BJ (cell line): ENCODE measurements at regions of chr1 and their contacts with region 1.

Region 1: GRCh38 chr1:167821969-167822685 is 91.8 kb downstream of the ADCY10 start:
- DNase-seq: no peak
- H3K4me3 ChIP-seq: no peak overlapping the region
- H3K27me3 ChIP-seq: no peaks in the 10 kb centered on the region
- CTCF ChIP-seq: no peak

Region 2: GRCh38 chr1:168136709-168137514 is 314.8 kb after region 1 on chr1 and contains the start of gene GPR161:
- CTCF ChIA-PET with region 1: no interaction called
- POLR2A ChIA-PET with region 1: interaction called, 10 read pairs
- DNase-seq: no peak
- H3K4me3 ChIP-seq: peak within 1 kb of the TSS; percentile 66
- H3K27me3 ChIP-seq: 0 out of 2 replicates have a peak, but pooled peaks cover 3% of the 10 kb centered on the region
- CTCF ChIP-seq: no peak
- polyA plus RNA-seq, gene GPR161: 14.7 and 20.4 TPM in 2 replicates